A549 (cell line): ENCODE measurements at regions of chr2 and their contacts with region 1.

Region 1: GRCh38 chr2:240143801-240144648 is 3.6 kb upstream of the OTOS start:
- DNase-seq: peak; percentile 39 to 79
- ATAC-seq: peak; percentile 83 to 95
- H3K4me3 ChIP-seq: no peak overlapping the region
- H3K27ac ChIP-seq: no peak overlapping the region
- H3K4me1 ChIP-seq: 0 out of 3 replicates have a peak, but pooled peaks cover 3% of the 10 kb centered on the region
- CTCF ChIP-seq: peak; percentile 89
- EP300 ChIP-seq: no peak
- POLR2A ChIP-seq: no peak
- RAD21 ChIP-seq: peak; percentile 95 to 97

Region 2: DNA sequence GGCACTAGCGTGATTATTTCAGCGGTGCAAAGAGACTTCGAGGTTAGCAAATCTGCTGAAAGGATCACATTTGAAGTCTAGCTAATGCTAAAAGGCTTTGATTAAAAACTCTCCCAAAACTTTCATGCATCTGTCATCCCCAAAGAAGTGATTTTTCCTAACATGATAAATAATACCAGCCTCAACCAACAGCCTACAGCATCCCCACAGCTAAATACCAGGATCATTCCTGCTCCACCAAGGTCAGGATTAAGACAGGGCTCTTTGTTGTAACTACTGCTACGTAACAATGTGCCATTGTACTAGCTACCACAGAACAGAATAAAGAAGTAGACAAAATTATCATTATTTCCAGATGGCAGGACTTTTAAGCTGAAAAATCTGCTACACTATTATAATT is 92.3 kb before region 1 on chr2:
- CTCF ChIA-PET with region 1: interaction called, 19 read pairs
- POLR2A ChIA-PET with region 1: no interaction called
- DNase-seq: no peak
- ATAC-seq: no peak
- H3K4me3 ChIP-seq: no peak overlapping the region
- H3K27ac ChIP-seq: no peak overlapping the region
- H3K4me1 ChIP-seq: no peaks in the 10 kb centered on the region
- CTCF ChIP-seq: no peak
- EP300 ChIP-seq: no peak
- POLR2A ChIP-seq: no peak
- RAD21 ChIP-seq: no peak

Region 3: DNA sequence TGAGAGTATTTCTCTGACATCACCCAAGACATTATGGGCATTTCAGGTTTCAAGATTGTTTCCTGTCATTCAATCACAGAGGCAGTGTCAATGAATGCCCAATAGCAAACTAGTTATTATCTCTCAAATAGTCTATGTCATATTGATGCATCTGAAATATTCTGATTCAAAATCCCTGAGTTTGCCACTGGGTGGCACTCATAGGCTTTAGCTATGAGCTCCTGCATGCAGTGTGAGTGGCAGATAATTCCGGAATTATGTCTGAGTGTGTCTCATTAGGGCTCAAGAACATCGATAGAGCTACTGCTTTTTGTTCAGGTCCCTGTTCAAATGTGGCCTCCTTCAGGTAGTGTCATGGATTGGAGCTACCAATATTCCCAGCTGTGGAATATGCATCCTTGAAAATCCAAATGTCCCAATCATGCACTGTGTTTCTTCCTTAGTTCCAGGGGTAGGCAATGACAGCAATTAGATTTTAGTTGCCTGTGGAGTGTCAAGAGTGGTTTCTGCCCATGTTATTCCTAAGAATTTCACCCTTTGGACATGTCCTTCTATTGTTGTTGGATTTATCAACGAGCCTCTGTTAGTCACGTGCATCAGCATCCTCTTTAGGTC is 82.9 kb before region 1 on chr2:
- CTCF ChIA-PET with region 1: interaction called, 176 read pairs
- POLR2A ChIA-PET with region 1: no interaction called
- DNase-seq: peak; percentile 15 to 59
- ATAC-seq: peak; percentile 80 to 95
- H3K4me3 ChIP-seq: no peak overlapping the region
- H3K27ac ChIP-seq: no peak overlapping the region
- H3K4me1 ChIP-seq: no peaks in the 10 kb centered on the region
- CTCF ChIP-seq: peak; percentile 64
- EP300 ChIP-seq: no peak
- POLR2A ChIP-seq: no peak
- RAD21 ChIP-seq: peak; percentile 77 to 86

Region 4: GRCh38 chr2:240069853-240070252 is 74.2 kb before region 1 on chr2:
- CTCF ChIA-PET with region 1: interaction called, 71 read pairs
- POLR2A ChIA-PET with region 1: no interaction called
- DNase-seq: no peak
- ATAC-seq: no peak
- H3K4me3 ChIP-seq: no peak overlapping the region
- H3K27ac ChIP-seq: no peak overlapping the region
- H3K4me1 ChIP-seq: no peaks in the 10 kb centered on the region
- CTCF ChIP-seq: no peak
- EP300 ChIP-seq: no peak
- POLR2A ChIP-seq: no peak
- RAD21 ChIP-seq: no peak

Region 5: GRCh38 chr2:240086563-240086962 is 57.5 kb before region 1 on chr2:
- CTCF ChIA-PET with region 1: interaction called, 10 read pairs
- POLR2A ChIA-PET with region 1: no interaction called
- DNase-seq: no peak
- ATAC-seq: no peak
- H3K4me3 ChIP-seq: no peak overlapping the region
- H3K27ac ChIP-seq: no peak overlapping the region
- H3K4me1 ChIP-seq: no peaks in the 10 kb centered on the region
- CTCF ChIP-seq: no peak
- EP300 ChIP-seq: no peak
- POLR2A ChIP-seq: no peak
- RAD21 ChIP-seq: no peak

Region 6: GRCh38 chr2:240111251-240111650 is 32.8 kb before region 1 on chr2:
- CTCF ChIA-PET with region 1: interaction called, 12 read pairs
- POLR2A ChIA-PET with region 1: no interaction called
- DNase-seq: no peak
- ATAC-seq: no peak
- H3K4me3 ChIP-seq: no peak overlapping the region
- H3K27ac ChIP-seq: no peak overlapping the region
- H3K4me1 ChIP-seq: no peaks in the 10 kb centered on the region
- CTCF ChIP-seq: no peak
- EP300 ChIP-seq: no peak
- POLR2A ChIP-seq: no peak
- RAD21 ChIP-seq: no peak

Region 7: DNA sequence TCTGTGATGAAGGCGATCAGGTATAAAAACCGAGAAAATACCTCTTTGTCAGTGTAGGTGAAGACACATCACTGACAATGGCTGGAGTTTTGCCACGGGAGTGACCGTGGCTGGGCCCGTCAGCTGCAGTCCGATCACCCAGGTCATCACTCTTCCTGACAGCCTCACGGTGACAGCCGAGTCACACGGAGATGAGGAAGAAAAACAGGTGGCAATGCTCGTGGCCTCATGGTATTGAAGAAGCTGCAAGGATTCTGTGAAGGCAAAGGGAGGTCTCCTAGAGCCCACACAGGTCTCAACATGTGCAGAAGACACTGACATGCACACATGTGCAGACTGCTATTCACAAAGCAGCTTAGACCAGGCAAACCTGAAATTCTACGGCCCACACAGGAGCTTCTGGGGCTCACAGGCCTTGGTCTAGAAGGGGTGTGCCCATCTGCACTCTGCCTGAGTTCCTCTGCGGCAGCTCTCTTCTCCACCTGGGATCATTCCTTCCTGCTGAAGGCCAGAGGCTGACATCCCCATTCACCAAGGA is 15.3 kb before region 1 on chr2:
- CTCF ChIA-PET with region 1: interaction called, 29 read pairs
- POLR2A ChIA-PET with region 1: no interaction called
- DNase-seq: no peak
- ATAC-seq: no peak
- H3K4me3 ChIP-seq: no peak overlapping the region
- H3K27ac ChIP-seq: no peak overlapping the region
- H3K4me1 ChIP-seq: no peaks in the 10 kb centered on the region
- CTCF ChIP-seq: no peak
- EP300 ChIP-seq: no peak
- POLR2A ChIP-seq: no peak
- RAD21 ChIP-seq: no peak